CD4-positive, alpha-beta memory T cell (primary cell): ENCODE measurements at regions of chr14 and their contacts with region 1.

Region 1: DNA sequence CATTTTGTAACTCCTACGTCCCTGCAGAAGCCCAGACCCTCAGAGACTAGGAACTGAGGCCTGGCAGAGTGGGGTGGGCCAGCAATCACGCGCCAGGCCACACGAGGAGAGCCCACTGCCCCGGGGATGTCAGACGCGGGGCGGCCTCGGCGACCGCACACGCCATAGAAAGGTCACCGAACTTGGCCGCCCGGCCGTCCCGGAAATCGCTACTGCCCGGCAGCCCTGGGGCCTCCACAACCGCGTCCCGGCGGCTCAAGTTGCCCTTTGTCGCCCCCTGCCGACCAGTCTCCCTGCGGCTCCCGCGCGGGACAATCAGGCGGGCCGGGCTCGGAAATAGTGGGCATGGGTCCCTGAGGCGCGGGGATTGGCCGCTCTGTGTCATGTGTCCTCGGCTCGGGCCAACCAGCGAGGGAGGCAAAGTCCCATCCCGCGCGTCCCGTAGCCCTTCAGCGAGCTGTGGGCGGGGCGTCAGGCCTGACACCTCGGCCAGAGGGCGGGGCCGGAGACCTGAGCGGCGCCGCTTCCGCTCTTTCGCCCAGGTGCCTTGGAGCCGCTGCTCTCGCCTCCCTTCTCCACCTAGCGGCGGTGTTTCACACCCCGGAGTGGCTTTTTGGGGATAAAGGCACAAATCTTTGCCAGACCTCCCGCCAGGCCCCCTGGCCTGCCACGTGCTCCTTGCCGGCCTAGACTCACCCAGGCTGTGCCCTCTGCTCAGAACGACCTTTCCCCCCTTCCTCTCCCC is 33.4 kb upstream of the DEGS2 start:
- DNase-seq: peak; percentile 99 to 100 (median 100)
- H3K4me3 ChIP-seq: peak overlapping the region in 1 of 2 donors; percentile 46
- H3K4me3 Mint-ChIP-seq: peak overlapping the region; percentile 54 to 70 (median 66)
- H3K27ac ChIP-seq: peak overlapping the region; percentile 65
- H3K27ac Mint-ChIP-seq: peak overlapping the region; percentile 81 to 96 (median 91)
- H3K4me1 ChIP-seq: peaks cover 13% of the 10 kb centered on the region
- H3K4me1 Mint-ChIP-seq: peaks cover 7 to 19% (median 9%) of the 10 kb centered on the region in 4 donors
- H3K27me3 ChIP-seq: no peaks in the 10 kb centered on the region
- H3K27me3 Mint-ChIP-seq: no peaks in the 10 kb centered on the region

Region 2: DNA sequence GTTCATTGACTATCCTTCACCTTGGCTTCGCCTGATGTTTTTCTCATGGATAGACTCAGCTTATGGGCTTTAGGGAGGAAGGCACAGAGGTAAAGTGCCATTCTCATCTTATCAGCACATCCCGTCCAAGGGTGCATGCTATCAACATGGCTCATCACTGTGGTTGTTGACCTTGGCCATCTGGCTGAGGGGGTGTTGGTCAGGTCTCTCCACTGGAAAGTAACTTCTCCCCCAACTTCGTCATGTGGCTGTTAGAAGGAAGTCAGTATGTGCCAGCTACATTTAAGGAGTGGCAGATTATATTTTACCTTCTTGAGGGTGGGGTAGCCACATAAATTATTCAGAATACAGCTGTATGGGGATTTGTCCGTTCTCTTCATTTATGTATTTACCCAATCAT is 330.7 kb before region 1 on chr14:
- CTCF ChIA-PET with region 1: no interaction called
- POLR2A ChIA-PET with region 1: no interaction called
- intact Hi-C with region 1: no loop called
- DNase-seq: no peak
- H3K4me3 ChIP-seq: no peak overlapping the region
- H3K4me3 Mint-ChIP-seq: no peak overlapping the region
- H3K27ac ChIP-seq: no peak overlapping the region
- H3K27ac Mint-ChIP-seq: no peak overlapping the region
- H3K4me1 ChIP-seq: no peaks in the 10 kb centered on the region
- H3K4me1 Mint-ChIP-seq: no peaks in the 10 kb centered on the region
- H3K27me3 ChIP-seq: no peaks in the 10 kb centered on the region
- H3K27me3 Mint-ChIP-seq: peaks cover 7 to 16% of the 10 kb centered on the region in 2 donors

Region 3: GRCh38 chr14:99971087-99971940 is 221.5 kb before region 1 on chr14:
- CTCF ChIA-PET with region 1: interaction called, 16 read pairs
- POLR2A ChIA-PET with region 1: interaction called, 3 read pairs
- intact Hi-C with region 1: no loop called
- DNase-seq: peak; percentile 77 to 83 (median 80)
- H3K4me3 ChIP-seq: peak overlapping the region in 1 of 2 donors; percentile 64
- H3K4me3 Mint-ChIP-seq: peak overlapping the region; percentile 56 to 81 (median 74)
- H3K27ac ChIP-seq: no peak overlapping the region
- H3K27ac Mint-ChIP-seq: peak overlapping the region in 1 of 7 donors; percentile 68
- H3K4me1 ChIP-seq: peaks cover 13% of the 10 kb centered on the region
- H3K4me1 Mint-ChIP-seq: peaks cover 7 to 17% (median 13%) of the 10 kb centered on the region in 4 donors
- H3K27me3 ChIP-seq: no peaks in the 10 kb centered on the region
- H3K27me3 Mint-ChIP-seq: peaks cover 5 to 14% of the 10 kb centered on the region in 2 donors

Region 4: GRCh38 chr14:100062590-100062989 is 130.3 kb before region 1 on chr14:
- CTCF ChIA-PET with region 1: interaction called, 50 read pairs
- POLR2A ChIA-PET with region 1: interaction called, 24 read pairs
- intact Hi-C with region 1: loop called (anchors 1 kb)
- DNase-seq: peak in 1 of 5 donors; percentile 73
- H3K4me3 ChIP-seq: peak overlapping the region; percentile 39 to 48
- H3K4me3 Mint-ChIP-seq: peak overlapping the region; percentile 73 to 99 (median 87)
- H3K27ac ChIP-seq: peak overlapping the region; percentile 61
- H3K27ac Mint-ChIP-seq: peak overlapping the region; percentile 95 to 100 (median 100)
- H3K4me1 ChIP-seq: peaks cover 75% of the 10 kb centered on the region
- H3K4me1 Mint-ChIP-seq: peaks cover 53 to 97% (median 63%) of the 10 kb centered on the region in 4 donors
- H3K27me3 ChIP-seq: no peaks in the 10 kb centered on the region
- H3K27me3 Mint-ChIP-seq: no peaks in the 10 kb centered on the region

Region 5: GRCh38 chr14:100108042-100108825 is 84.6 kb before region 1 on chr14:
- CTCF ChIA-PET with region 1: interaction called, 16 read pairs
- POLR2A ChIA-PET with region 1: interaction called, 3 read pairs
- intact Hi-C with region 1: loop called (anchors 1 kb)
- DNase-seq: peak; percentile 78 to 87 (median 83)
- H3K4me3 ChIP-seq: no peak overlapping the region
- H3K4me3 Mint-ChIP-seq: peak overlapping the region; percentile 24 to 79 (median 60)
- H3K27ac ChIP-seq: peak overlapping the region; percentile 67
- H3K27ac Mint-ChIP-seq: peak overlapping the region; percentile 95 to 98 (median 96)
- H3K4me1 ChIP-seq: peaks cover 75% of the 10 kb centered on the region
- H3K4me1 Mint-ChIP-seq: peaks cover 64 to 83% (median 71%) of the 10 kb centered on the region in 4 donors
- H3K27me3 ChIP-seq: no peaks in the 10 kb centered on the region
- H3K27me3 Mint-ChIP-seq: no peaks in the 10 kb centered on the region

Region 6: GRCh38 chr14:100213956-100214774 is 21.3 kb after region 1 on chr14:
- CTCF ChIA-PET with region 1: interaction called, 94 read pairs
- POLR2A ChIA-PET with region 1: interaction called, 4 read pairs
- intact Hi-C with region 1: loop called (anchors 1 kb)
- DNase-seq: peak; percentile 87 to 90 (median 89)
- H3K4me3 ChIP-seq: peak overlapping the region; percentile 36 to 86
- H3K4me3 Mint-ChIP-seq: peak overlapping the region; percentile 77 to 85 (median 82)
- H3K27ac ChIP-seq: peak overlapping the region; percentile 85
- H3K27ac Mint-ChIP-seq: peak overlapping the region; percentile 75 to 96 (median 96)
- H3K4me1 ChIP-seq: peaks cover 26% of the 10 kb centered on the region
- H3K4me1 Mint-ChIP-seq: peaks cover 12 to 41% (median 25%) of the 10 kb centered on the region in 4 donors
- H3K27me3 ChIP-seq: no peaks in the 10 kb centered on the region
- H3K27me3 Mint-ChIP-seq: no peaks in the 10 kb centered on the region

Region 7: DNA sequence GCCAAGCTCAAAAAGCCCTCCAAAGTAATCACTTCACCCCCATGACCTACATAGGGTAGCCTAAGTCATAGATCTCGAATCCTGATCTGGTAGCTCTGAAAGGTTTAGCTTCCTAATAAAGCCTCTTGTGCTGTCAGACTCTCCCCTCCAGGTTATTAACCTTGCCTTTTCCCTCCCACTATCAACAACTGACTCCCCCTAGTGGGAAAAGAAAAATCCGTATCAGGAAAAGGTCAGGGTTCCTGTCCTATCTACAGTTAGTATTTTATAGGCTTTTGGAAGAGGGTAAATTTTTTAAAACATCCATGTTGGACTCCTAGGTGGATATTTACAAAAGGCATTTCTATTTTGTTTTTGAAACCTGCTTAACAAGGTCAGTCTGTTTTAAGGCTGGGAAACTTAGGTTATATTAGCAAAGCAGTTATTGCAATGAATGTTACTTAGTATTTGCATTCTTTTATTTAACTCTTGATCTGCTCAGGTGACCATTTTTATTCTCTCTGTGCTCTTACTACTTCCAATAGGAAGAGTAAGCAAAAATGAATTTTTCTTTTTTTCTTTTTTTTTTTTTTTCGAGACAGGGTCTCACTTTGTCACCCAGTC is 54.1 kb after region 1 on chr14:
- CTCF ChIA-PET with region 1: interaction called, 43 read pairs
- POLR2A ChIA-PET with region 1: interaction called, 5 read pairs
- intact Hi-C with region 1: loop called (anchors 1 kb)
- DNase-seq: peak in 4 of 5 donors; percentile 30 to 48 (median 44)
- H3K4me3 ChIP-seq: no peak overlapping the region
- H3K4me3 Mint-ChIP-seq: peak overlapping the region in 7 of 8 donors; percentile 6 to 72 (median 56)
- H3K27ac ChIP-seq: no peak overlapping the region
- H3K27ac Mint-ChIP-seq: peak overlapping the region; percentile 64 to 91 (median 76)
- H3K4me1 ChIP-seq: peaks cover 93% of the 10 kb centered on the region
- H3K4me1 Mint-ChIP-seq: peaks cover 54 to 80% (median 64%) of the 10 kb centered on the region in 4 donors
- H3K27me3 ChIP-seq: no peaks in the 10 kb centered on the region
- H3K27me3 Mint-ChIP-seq: no peaks in the 10 kb centered on the region